Dendritic cell treated with granulocyte-macrophage colony-stimulating factor and Interleukin-4, amounts not matched to agents 40 ng/mL and 50 ng/mL, for 4 days (primary cell): ENCODE measurements at regions of chr7 and their contacts with region 1.

Region 1: DNA sequence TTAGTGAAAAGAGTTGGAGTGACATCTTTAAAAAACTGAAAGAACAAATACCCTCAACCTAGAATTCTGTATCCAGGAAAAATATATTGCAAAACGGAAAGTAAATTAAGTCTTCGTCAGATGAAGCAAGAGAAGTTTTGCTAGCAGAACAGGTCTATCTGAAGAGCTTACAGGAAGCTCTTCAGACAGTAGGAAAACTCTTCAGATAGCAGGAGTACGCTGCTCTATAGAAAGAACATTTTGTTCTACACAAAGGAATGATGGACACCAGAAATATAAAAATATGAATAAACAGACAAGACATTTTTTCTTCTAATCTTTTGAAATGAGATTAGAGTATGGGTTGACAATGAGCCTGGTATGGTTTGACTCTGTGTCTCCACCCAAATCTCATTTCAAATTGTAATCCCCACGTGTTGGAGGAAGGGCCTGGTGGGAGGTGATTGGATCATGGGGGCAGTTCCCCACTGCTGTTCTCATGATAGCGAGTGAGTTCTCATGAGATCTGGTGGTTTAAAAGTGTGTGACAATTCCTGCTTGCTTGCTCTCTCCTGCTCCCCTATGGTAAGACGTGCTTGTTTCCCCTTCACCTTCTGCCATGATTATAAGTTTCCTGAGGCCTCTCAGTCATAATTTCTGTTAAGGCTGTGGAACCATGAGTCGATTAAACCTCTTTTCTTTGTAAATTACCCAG is 567.3 kb downstream of the AUTS2 start:
- H3K4me3 Mint-ChIP-seq: no peak overlapping the region
- H3K27ac Mint-ChIP-seq: no peak overlapping the region
- H3K4me1 Mint-ChIP-seq: no peaks in the 10 kb centered on the region
- H3K27me3 Mint-ChIP-seq: peaks cover 4% of the 10 kb centered on the region

Region 2: GRCh38 chr7:70183278-70183677 is 17.7 kb after region 1 on chr7:
- intact Hi-C with region 1: no loop called
- H3K4me3 Mint-ChIP-seq: no peak overlapping the region
- H3K27ac Mint-ChIP-seq: no peak overlapping the region
- H3K4me1 Mint-ChIP-seq: peaks cover 19% of the 10 kb centered on the region
- H3K27me3 Mint-ChIP-seq: peaks cover 27% of the 10 kb centered on the region

Region 3: DNA sequence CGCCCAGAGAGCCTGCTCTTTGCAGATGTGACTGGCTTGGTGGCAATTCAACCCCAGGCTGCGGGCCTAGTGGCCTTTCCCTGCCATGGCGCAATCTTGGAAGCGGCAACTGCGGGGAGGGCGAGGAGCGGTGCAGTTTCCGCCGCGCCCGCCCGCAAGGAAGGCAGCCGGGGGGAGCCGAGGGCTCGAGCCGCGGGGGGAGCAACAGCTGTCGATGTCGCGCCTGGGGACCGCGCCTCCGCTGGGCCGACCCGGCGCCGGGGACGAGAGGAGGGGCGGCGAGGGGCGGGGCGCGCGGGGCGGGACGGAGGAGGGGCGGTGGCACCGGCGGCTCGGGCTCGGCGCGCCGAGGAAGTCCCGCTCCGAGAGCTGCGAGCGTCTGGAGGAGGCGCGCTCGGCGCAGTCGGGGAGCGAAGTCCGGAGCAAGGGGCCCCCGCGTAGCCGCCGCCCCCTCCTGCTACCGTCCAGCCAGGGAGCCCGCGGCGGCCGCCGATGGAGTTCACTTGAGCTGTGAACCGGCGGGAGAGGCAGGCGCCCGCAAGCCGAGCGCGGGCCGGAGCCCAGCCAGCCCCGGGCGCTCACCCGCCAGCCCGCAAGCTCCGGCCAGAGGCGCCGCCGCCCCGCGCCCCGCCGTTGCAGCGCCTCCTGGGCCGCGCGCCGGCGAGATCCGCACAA is 528.2 kb after region 1 on chr7:
- intact Hi-C with region 1: loop called (anchors 10 kb)
- H3K4me3 Mint-ChIP-seq: peak overlapping the region; percentile 71
- H3K27ac Mint-ChIP-seq: no peak overlapping the region
- H3K4me1 Mint-ChIP-seq: peaks cover 14% of the 10 kb centered on the region
- H3K27me3 Mint-ChIP-seq: peaks cover 61% of the 10 kb centered on the region